ENCODE measurements at regions of chr22 and their contacts with region 1.

Region 1: DNA sequence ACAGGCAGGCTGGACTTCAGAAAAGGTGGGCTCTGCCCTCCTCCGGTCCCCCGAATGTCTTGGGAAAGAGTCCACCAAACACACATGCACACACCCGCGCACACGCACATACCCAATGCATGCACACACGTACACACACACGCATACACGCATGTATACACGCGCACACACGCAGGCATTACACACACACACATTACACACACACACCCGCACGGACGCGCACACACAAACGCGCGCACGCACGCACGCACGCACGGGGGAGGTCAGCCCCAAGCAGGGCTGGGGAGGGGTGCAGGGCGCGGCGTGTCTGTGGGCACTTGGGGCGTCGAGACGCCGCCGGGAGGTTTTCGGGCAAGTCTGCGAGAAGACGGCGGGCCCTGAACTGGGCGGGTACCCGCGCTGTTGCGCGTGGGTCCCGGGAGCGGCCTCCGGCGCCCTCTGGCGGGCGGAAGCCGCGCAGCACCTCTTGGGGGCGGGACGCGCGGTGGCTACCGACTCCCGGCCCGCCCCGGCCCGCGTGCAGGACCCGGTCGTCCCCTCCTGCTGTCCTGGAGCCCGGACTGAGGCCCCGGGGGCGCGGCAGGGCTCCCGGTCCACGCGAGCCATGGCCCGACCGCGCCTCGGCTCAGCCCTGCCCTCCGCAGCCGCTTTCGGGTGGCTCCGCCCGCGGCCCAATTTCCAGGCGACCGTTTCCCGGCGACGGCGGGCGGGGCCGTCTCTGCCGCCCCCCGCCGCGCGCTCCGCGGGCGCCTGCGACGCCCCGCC is 3.6 kb downstream of the SEPTIN5 start:
- DNase-seq: peak; percentile 83
- H3K4me3 Mint-ChIP-seq: peak overlapping the region; percentile 60
- H3K27ac Mint-ChIP-seq: no peak overlapping the region
- H3K4me1 Mint-ChIP-seq: peaks cover 8% of the 10 kb centered on the region
- H3K27me3 Mint-ChIP-seq: peaks cover 45% of the 10 kb centered on the region

Region 2: DNA sequence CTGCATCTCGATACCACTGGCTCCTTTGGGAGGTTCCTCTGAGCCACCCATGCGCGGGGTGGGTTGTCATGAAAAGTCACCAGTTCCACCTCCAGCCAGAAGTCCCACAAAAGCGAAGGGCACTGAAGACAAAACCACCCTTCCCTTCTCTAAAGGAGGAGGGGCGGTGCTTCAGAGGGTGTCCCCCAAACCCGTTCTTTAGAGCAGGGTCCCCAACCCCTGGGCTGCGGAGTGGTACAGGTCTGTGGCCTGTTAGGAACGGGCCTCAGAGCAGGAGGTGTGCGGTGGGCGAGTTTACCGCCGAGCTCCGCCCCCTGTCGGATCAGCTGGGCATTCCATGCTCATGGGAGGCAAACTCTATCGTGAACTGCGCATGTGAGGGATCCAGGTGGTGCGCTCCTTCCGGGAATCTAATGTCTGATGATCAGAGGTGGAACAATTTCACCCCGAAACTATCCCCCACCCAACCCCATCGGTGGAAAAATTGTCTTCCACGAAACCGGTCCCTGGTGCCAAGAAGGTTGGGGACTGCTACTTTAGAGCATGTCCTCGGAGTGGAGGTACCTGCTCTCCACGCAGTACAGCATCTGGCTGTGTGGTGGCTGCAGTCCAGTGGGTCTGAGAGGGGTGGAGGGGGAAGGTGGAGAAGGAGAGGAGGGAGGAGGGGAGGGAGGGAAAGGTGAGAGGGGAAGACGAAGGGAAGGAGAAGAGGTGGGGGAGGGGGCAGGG is 76.5 kb before region 1 on chr22:
- CTCF ChIA-PET with region 1: no interaction called
- POLR2A ChIA-PET with region 1: no interaction called
- intact Hi-C with region 1: loop called (anchors 10 kb)
- DNase-seq: no peak
- H3K4me3 Mint-ChIP-seq: no peak overlapping the region
- H3K27ac Mint-ChIP-seq: no peak overlapping the region
- H3K4me1 Mint-ChIP-seq: no peaks in the 10 kb centered on the region
- H3K27me3 Mint-ChIP-seq: peaks cover 16% of the 10 kb centered on the region

Region 3: DNA sequence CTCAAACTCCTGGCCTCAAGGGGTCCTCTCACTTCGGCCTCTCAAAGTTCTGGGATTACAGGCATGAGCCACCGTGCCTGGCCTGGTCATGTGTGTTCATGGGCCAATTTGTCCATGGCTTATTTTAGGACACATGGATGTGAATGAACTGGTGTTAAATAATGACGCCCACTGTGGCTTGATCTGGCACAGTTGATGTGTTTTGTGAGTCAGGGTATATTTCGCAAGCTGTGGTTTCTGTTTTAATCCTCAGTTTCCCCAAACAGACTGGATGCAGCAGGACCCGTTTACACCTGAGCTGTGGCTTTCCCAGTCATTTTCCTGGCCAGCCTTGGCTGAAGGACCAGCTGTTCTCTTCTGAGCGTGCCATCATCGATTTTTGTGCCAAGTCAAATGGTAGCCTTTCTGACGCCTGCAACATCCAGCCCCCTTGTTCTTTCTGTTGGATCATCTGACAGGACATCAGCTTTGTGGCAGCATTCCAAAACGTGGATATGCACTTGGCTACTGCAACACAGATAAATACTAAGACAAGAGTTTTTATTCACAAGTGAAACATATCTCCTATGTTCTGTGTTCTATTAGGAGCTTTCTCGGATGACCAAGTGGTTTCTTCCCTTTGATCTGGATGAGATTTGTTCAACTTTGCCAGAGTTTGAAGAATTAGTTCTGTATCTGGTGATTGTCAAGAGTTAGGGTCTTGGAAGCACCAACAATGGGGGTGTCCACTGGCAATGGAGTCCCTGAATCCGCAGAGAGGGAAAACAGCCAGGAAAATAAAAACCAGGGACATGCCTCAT is 43.5 kb before region 1 on chr22:
- CTCF ChIA-PET with region 1: interaction called, 11 read pairs
- POLR2A ChIA-PET with region 1: no interaction called
- intact Hi-C with region 1: loop called (anchors 1 kb)
- DNase-seq: no peak
- H3K4me3 Mint-ChIP-seq: no peak overlapping the region
- H3K27ac Mint-ChIP-seq: no peak overlapping the region
- H3K4me1 Mint-ChIP-seq: no peaks in the 10 kb centered on the region
- H3K27me3 Mint-ChIP-seq: peaks cover 3% of the 10 kb centered on the region

Region 4: DNA sequence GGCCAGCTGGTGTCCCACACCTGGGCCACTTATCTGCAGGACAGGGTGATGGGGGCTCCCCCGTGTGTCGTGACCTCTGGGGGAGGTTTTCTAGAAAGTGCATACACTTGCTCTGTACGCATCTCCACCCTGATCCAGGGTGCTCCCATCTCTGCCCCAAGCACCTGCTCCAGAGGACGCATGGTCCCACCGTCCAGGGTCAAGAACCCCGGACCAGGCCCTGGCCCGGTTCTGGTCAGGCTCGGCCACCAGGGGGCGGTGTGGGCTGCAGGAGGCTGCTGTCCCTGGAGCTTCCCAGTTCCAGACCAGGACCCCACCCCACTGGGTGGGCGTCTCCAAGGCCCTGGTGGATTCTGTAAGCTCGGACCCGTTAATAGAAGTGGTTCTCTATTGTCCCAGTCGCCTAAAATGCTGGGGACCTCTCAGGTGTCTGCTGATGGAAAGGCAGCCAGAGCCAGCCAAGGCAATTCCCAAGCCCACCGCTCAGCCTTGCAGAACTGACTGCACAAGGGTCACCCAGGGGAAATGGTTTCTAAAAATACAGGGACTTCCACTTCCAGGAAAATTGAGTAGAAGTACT is 38.3 kb before region 1 on chr22:
- CTCF ChIA-PET with region 1: interaction called, 11 read pairs
- POLR2A ChIA-PET with region 1: no interaction called
- intact Hi-C with region 1: loop called (anchors 1 kb)
- DNase-seq: peak; percentile 45
- H3K4me3 Mint-ChIP-seq: no peak overlapping the region
- H3K27ac Mint-ChIP-seq: no peak overlapping the region
- H3K4me1 Mint-ChIP-seq: peaks cover 4% of the 10 kb centered on the region
- H3K27me3 Mint-ChIP-seq: peaks cover 4% of the 10 kb centered on the region

Region 5: DNA sequence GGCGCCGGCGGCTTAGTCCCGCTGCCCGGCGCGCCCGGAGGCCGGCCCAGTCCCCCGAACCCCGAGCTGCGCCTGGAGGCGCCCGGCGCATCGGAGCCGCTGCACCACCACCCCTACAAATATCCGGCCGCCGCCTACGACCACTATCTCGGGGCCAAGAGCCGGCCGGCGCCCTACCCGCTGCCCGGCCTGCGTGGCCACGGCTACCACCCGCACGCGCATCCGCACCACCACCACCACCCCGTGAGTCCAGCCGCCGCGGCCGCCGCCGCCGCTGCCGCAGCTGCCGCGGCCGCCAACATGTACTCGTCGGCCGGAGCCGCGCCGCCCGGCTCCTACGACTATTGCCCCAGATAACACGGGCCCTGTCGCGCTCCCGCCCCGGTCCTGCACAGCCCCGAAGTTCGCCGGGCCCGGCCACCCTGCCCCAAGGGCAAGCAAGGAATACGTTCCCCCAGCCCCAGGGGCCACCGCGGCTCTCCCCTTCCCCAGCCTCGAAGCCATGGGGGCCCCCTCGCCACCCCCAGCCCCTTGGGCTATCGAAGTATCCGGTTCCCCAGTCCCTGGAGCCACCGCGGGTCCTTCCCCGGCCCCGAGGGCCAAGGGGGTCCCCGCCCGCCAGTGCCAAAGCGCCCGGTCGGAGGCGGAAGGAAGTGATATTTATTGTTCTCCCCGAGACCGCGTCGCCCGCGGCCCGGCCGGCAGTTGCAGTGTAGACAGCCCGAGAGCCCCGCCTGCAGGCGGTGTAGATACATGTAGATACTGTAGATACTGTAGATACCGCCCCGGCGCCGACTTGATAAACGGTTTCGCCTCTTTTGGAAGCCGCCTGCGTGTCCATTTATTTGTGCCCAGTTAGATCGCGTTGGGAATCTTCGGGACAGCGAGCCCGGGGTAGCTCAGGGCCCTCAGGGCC is 48.9 kb after region 1 on chr22:
- CTCF ChIA-PET with region 1: no interaction called
- POLR2A ChIA-PET with region 1: no interaction called
- intact Hi-C with region 1: no loop called
- DNase-seq: peak; percentile 70
- H3K4me3 Mint-ChIP-seq: peak overlapping the region; percentile 29
- H3K27ac Mint-ChIP-seq: no peak overlapping the region
- H3K4me1 Mint-ChIP-seq: peaks cover 6% of the 10 kb centered on the region
- H3K27me3 Mint-ChIP-seq: peaks cover 65% of the 10 kb centered on the region

Measured in activated CD4-positive, alpha-beta memory T cell treated with anti-CD3 and anti-CD28 coated beads for 36 hours (primary cell).